Left ventricle myocardium inferior (tissue), 1 donor: ENCODE measurements at regions of chr6 and their contacts with region 1.

Region 1: DNA sequence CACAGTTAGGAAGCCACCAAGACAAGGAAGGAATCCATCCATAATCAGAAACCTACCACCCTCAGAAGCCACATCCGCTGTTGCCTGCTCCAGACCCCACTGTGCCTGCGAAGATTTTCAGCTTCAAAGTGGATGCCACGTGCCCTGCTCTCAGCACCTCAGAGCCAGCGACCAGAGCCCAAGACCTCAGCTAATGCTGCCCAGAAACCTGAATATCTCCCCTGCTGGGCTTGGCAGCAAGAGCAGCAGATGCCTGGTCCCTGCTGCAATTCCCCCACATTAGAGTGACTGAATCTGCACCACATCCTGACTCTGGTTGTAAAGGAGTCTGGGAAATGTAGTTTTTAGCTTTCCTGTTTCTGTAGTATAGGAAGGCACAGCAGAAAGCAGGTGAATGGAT is 10.7 kb upstream of the ULBP3 start:
- DNase-seq: no peak
- H3K4me3 ChIP-seq: no peak overlapping the region
- H3K27ac ChIP-seq: no peak overlapping the region
- H3K4me1 ChIP-seq: no peaks in the 10 kb centered on the region
- H3K27me3 ChIP-seq: peaks cover 35% of the 10 kb centered on the region
- CTCF ChIP-seq: no peak

Region 2: DNA sequence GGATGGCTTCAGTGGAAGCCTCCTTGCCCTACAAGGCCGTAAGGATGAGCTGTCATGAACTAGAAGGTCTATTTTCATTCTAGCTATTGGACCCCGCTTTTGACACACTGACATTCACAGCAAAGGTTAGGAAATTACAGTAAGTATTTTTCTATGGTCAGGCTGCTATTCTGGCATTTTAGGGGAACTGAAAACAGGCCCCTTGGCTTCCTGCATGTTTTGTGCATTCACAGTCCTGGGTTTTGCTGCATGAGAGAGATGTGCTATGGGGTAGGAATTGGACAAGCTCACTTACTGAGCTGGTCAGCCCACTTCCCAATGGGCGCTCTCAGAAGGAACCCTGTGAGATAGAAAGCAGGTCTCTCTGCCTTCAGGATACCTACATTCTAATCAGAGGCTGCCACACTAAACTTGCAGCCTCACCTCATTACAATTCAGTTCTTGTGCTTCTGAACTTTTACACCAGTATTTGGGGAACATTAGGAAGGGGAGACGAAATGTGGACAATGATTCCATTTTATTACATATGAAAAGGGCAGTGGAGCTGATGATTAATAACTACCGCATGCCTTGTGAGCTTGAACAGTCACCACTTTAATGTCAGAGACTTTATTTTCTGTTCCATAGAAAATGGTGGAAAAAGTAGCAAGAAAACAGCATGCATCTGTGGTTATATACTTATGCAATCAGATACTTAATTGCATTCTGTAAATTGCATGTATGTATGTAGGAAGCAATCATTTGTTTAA is 848.7 kb before region 1 on chr6:
- intact Hi-C with region 1: no loop called
- DNase-seq: no peak
- H3K4me3 ChIP-seq: no peak overlapping the region
- H3K27ac ChIP-seq: no peak overlapping the region
- H3K4me1 ChIP-seq: peaks cover 7% of the 10 kb centered on the region
- H3K27me3 ChIP-seq: no peaks in the 10 kb centered on the region
- CTCF ChIP-seq: no peak

Region 3: GRCh38 chr6:149608381-149608982 is 471.1 kb before region 1 on chr6:
- intact Hi-C with region 1: no loop called
- DNase-seq: no peak
- H3K4me3 ChIP-seq: no peak overlapping the region
- H3K27ac ChIP-seq: no peak overlapping the region
- H3K4me1 ChIP-seq: peaks cover 9% of the 10 kb centered on the region
- H3K27me3 ChIP-seq: no peaks in the 10 kb centered on the region
- CTCF ChIP-seq: no peak

Region 4: DNA sequence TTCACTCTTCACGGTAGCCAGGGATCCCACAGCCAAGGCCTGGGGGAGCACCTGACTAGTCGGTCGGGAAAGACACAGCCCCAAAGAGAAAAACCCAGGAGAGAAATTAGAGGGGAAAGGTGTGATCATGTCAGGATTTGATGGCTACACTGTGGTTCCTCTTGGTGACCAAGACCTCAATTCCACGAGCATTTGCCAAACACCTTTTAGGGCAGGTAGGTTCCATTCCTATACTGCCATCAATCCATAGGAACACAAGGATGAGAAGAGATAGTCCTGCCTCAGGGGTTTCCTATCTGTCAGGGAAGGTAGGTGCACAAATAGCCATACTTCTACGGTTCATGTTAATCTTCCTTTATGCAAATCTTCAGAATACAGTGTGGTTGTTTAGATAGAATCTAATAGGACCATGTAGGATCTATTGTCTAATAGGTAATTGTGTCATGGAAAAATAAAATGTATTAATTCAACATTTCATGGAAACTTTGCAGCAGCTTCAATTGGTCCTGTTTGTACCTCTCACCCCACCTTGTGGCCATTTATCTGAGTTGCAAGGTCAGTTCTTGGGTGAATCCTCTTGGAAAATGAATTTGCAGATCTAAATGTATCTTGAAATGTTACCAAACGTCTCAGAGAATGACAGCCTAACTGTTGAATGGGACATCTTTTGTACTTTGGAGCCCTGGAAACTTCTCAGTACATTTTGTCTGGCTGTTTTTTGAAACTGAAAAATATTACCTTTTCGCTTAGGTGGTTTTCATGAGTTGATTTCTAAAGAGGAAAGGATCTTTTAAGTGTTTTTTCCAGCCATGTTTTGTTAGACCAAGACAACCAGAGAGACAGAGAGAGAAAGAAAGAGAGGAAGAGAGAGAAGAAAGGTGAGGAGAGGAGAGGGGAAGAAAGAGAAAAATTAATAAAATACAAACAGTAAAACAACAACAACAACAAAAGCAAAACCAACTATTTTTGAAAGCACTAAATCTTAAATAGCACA is 255.5 kb after region 1 on chr6:
- intact Hi-C with region 1: loop called (anchors 2 kb)
- DNase-seq: no peak
- H3K4me3 ChIP-seq: no peak overlapping the region
- H3K27ac ChIP-seq: no peak overlapping the region
- H3K4me1 ChIP-seq: no peaks in the 10 kb centered on the region
- H3K27me3 ChIP-seq: peaks cover 3% of the 10 kb centered on the region
- CTCF ChIP-seq: peak; percentile 91

Region 5: DNA sequence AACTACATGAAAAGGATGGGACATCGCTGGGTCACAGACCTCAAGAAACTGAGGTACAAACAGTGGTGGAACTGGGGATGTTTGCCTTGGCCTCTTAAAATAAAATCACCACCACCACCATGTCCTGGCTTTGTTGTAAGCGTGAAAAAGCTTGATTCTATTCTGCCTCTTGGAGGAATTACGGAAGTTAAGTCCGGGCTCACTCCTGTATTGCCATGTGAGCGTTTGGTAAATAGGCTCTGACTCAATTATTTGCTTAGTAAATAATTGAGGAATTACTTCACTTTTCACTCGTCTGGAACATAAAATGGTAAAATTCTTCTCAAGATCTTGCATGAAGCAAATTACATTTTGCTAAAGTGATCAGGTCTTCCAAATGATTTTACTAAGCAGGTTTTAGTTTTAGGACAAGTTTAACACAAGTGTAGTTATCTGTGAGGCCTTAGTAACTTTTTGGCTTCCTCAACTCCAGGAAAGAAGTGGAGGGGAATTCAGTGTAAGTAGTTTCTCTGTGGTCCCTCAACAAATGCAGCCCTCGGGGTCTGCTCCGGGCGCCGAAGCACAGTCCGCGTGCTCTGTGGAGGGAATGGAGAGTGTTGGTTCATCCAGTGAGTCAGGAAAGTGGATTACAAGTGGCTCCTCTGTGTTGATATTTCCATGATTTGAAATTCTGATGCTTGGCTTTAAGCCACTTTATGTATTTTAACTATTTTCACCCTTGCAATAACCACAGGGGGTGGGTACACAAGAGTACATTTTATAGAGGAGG is 313.0 kb after region 1 on chr6:
- intact Hi-C with region 1: loop called (anchors 5 kb)
- DNase-seq: no peak
- H3K4me3 ChIP-seq: no peak overlapping the region
- H3K27ac ChIP-seq: no peak overlapping the region
- H3K4me1 ChIP-seq: no peaks in the 10 kb centered on the region
- H3K27me3 ChIP-seq: peaks cover 11% of the 10 kb centered on the region
- CTCF ChIP-seq: no peak